Gastrocnemius medialis (tissue), 4 donors: ENCODE measurements at regions of chr11 and their contacts with region 1.

Region 1: DNA sequence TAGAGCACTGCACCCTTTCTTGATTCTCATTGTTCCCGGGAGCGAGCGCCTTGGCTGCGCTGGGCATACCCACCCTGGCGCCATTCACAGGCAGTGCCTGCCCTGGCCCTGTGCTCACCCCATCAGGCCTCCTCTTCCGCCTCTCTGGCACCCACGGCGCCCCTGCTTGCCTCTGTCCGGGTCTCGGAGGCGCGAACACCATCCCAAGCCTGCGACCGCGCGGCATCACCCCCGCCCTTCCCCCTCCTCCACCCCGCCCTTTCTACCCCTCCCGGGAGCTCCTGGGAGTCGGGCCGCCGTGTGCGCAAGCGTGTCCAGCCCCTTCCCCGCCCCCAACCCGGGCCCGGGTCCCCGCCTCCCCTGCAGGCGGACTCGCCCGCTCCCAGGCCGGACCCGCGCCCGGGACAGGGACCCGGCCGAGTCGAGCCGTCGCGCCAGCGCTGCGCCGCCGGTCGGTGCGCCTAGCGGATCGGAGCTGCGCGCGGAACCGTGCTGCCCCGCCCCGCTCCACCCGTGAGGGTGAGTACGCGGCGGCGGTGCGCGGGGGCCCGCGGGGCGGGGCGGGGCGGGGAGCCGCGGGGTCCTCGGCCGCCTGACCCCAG is at the start of gene ST3GAL4:
- DNase-seq: peak; percentile 43
- ATAC-seq: peak; percentile 55 to 69
- H3K4me3 ChIP-seq: peak within 1 kb of the TSS; percentile 61 to 72 (median 65)
- H3K27ac ChIP-seq: peak within 1 kb of the TSS; percentile 23 to 71 (median 51)
- H3K4me1 ChIP-seq: peaks cover 26 to 48% of the 10 kb centered on the region in 2 donors
- H3K27me3 ChIP-seq: no peaks in the 10 kb centered on the region
- CTCF ChIP-seq: no peak
- POLR2A ChIP-seq: no peak
- total RNA-seq, gene ST3GAL4: 3.4 to 12.4 (median 9.6) TPM

Region 2: GRCh38 chr11:126293726-126294125 is 61.7 kb before region 1 on chr11:
- in situ Hi-C with region 1: loop called in 1 of 4 experiments (anchors 10 kb)
- intact Hi-C with region 1: no loop called
- DNase-seq: no peak
- ATAC-seq: no peak
- H3K4me3 ChIP-seq: no peak overlapping the region
- H3K27ac ChIP-seq: no peak overlapping the region
- H3K4me1 ChIP-seq: no peaks in the 10 kb centered on the region
- H3K27me3 ChIP-seq: no peaks in the 10 kb centered on the region
- CTCF ChIP-seq: no peak
- POLR2A ChIP-seq: no peak

Region 3: GRCh38 chr11:126310228-126310991 is 45.0 kb before region 1 on chr11:
- in situ Hi-C with region 1: no loop called
- intact Hi-C with region 1: loop called (anchors 5 kb)
- DNase-seq: peak; percentile 53 to 69
- ATAC-seq: peak; percentile 73 to 75
- H3K4me3 ChIP-seq: no peak overlapping the region
- H3K27ac ChIP-seq: peak overlapping the region in 3 of 4 donors; percentile 23 to 79 (median 43)
- H3K4me1 ChIP-seq: peaks cover 16 to 29% of the 10 kb centered on the region in 2 donors
- H3K27me3 ChIP-seq: no peaks in the 10 kb centered on the region
- CTCF ChIP-seq: peak; percentile 67 to 89 (median 80)
- POLR2A ChIP-seq: no peak